Left lung (tissue), 14 donors: ENCODE measurements at regions of chr9 and their contacts with region 1.

Region 1: DNA sequence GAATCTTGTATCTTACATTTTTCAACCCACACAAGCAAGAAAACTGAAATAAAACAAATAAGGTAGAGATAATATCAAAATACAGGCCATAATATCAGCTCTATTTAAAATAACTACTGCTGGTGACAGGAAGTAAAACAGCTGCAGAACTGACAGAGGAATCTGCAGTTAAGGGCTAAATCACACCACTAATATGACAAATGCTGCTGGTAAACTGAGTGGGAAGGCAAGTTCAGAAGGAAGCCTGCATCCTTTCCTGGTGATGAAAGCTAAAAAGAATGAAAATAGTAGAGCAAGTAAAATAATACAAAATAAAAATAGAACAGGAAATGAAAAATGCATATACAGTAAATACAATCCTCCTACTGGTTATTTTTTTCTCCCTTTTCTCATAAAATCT is 1293.7 kb upstream of the C9orf72 start:
- DNase-seq: no peak
- ATAC-seq: no peak
- H3K4me3 ChIP-seq: no peak overlapping the region
- H3K27ac ChIP-seq: no peak overlapping the region
- H3K4me1 ChIP-seq: no peaks in the 10 kb centered on the region
- H3K27me3 ChIP-seq: no peaks in the 10 kb centered on the region
- CTCF ChIP-seq: no peak

Region 2: DNA sequence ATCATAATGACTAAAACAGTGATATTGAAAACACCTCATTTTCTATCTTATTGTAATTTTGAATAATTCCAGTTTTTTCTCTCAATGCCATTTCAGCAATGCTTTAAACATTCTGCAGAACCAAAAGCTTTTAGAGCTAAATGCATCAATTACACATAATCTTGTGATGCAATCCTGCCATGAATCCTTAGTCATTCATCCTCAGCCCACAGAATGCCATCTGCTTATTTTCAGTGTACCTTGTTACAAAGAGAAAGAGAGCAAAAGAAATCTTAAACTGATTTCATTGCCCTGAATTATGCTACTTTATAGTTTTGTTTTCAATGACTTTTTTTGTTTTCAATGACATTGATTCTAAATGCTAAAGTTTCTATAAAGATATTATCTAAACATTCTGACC is 58.9 kb before region 1 on chr9:
- intact Hi-C with region 1: loop called in 1 of 2 experiments (anchors 10 kb)
- DNase-seq: no peak
- ATAC-seq: no peak
- H3K4me3 ChIP-seq: no peak overlapping the region
- H3K27ac ChIP-seq: no peak overlapping the region
- H3K4me1 ChIP-seq: no peaks in the 10 kb centered on the region
- H3K27me3 ChIP-seq: no peaks in the 10 kb centered on the region
- CTCF ChIP-seq: no peak